IMR-90 (cell line): ENCODE measurements at regions of chr6 and their contacts with region 1.

Region 1: DNA sequence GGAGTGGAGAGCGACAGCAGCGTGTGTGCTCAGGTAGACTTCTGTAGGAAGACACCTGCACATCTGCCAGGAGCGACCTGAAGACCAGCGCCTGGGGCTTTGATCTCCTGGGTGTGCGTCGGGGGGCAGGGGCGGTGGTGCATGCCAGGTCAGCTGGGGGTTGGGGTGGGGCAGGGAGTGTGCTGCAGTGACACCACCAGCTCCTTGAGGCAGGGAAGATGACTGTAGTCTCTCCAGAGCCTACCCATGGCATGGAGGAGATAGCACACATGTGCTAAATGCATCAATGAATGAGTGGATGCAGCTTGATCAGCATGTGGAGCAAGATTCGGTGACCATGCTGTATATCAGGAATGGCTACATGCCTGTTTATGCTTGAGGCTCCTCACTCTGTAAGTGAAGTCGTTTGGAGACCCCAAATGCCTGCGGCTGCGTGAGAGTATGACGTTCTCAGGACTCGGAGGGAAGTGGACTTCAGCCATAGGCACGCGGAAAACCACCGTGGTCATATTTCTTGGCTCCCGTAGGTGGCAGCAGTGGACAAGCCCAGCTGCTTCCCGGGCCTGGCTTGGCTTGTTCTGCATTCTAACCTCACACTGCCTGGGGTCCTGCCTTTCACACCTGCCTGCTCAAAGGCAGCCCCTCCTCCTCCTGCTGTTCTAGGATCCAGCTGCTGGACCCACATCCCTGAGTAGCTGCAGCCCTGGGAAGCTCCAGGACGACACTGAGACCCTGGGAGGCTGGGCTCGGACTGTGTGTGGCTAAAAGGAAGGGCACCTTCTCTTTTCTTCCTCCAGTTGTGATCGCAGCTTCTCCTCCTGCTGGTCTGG is 39.4 kb upstream of the KCNK16 start:
- DNase-seq: peak; percentile 58
- ATAC-seq: peak; percentile 98
- H3K4me3 ChIP-seq: no peak overlapping the region
- H3K27ac ChIP-seq: no peak overlapping the region
- H3K4me1 ChIP-seq: no peaks in the 10 kb centered on the region; the same call in 1 of the 2 replicates
- H3K27me3 ChIP-seq: no peaks in the 10 kb centered on the region
- CTCF ChIP-seq: peak; percentile 75
- POLR2A ChIP-seq: no peak
- RAD21 ChIP-seq: peak; percentile 87

Region 2: GRCh38 chr6:39137245-39137644 is 224.6 kb before region 1 on chr6:
- CTCF ChIA-PET with region 1: no interaction called
- POLR2A ChIA-PET with region 1: no interaction called
- dilution Hi-C with region 1: no loop called
- in situ Hi-C with region 1: no loop called
- intact Hi-C with region 1: no loop called
- DNase-seq: peak; percentile 41
- ATAC-seq: peak; percentile 65
- H3K4me3 ChIP-seq: no peak overlapping the region
- H3K27ac ChIP-seq: no peak overlapping the region
- H3K4me1 ChIP-seq: no peaks in the 10 kb centered on the region
- H3K27me3 ChIP-seq: no peaks in the 10 kb centered on the region
- CTCF ChIP-seq: no peak
- POLR2A ChIP-seq: no peak
- RAD21 ChIP-seq: no peak

Region 3: GRCh38 chr6:39887381-39888070 is 525.7 kb after region 1 on chr6:
- CTCF ChIA-PET with region 1: no interaction called
- POLR2A ChIA-PET with region 1: no interaction called
- dilution Hi-C with region 1: no loop called
- in situ Hi-C with region 1: loop called (anchors 10 kb)
- intact Hi-C with region 1: loop called (anchors 1 kb)
- DNase-seq: peak; percentile 95
- ATAC-seq: peak; percentile 87
- H3K4me3 ChIP-seq: no peak overlapping the region
- H3K27ac ChIP-seq: peak overlapping the region; percentile 96
- H3K4me1 ChIP-seq: peaks cover 49% of the 10 kb centered on the region
- H3K27me3 ChIP-seq: no peaks in the 10 kb centered on the region
- CTCF ChIP-seq: no peak
- POLR2A ChIP-seq: no peak; the same call in 1 of the 2 replicates
- RAD21 ChIP-seq: no peak

Region 4: GRCh38 chr6:40845553-40845952 is 1483.7 kb after region 1 on chr6:
- CTCF ChIA-PET with region 1: no interaction called
- POLR2A ChIA-PET with region 1: no interaction called
- dilution Hi-C with region 1: no loop called
- in situ Hi-C with region 1: loop called (anchors 25 kb)
- intact Hi-C with region 1: no loop called
- DNase-seq: peak; percentile 37
- ATAC-seq: peak; percentile 42; the same call in 1 of the 2 replicates
- H3K4me3 ChIP-seq: no peak overlapping the region
- H3K27ac ChIP-seq: no peak overlapping the region
- H3K4me1 ChIP-seq: no peaks in the 10 kb centered on the region
- H3K27me3 ChIP-seq: peaks cover 10% of the 10 kb centered on the region; the same call in 1 of the 2 replicates
- CTCF ChIP-seq: peak; percentile 53
- POLR2A ChIP-seq: no peak
- RAD21 ChIP-seq: peak; percentile 51